OCI-LY7 (cell line): ENCODE measurements at regions of chr19 and their contacts with region 1.

Region 1: DNA sequence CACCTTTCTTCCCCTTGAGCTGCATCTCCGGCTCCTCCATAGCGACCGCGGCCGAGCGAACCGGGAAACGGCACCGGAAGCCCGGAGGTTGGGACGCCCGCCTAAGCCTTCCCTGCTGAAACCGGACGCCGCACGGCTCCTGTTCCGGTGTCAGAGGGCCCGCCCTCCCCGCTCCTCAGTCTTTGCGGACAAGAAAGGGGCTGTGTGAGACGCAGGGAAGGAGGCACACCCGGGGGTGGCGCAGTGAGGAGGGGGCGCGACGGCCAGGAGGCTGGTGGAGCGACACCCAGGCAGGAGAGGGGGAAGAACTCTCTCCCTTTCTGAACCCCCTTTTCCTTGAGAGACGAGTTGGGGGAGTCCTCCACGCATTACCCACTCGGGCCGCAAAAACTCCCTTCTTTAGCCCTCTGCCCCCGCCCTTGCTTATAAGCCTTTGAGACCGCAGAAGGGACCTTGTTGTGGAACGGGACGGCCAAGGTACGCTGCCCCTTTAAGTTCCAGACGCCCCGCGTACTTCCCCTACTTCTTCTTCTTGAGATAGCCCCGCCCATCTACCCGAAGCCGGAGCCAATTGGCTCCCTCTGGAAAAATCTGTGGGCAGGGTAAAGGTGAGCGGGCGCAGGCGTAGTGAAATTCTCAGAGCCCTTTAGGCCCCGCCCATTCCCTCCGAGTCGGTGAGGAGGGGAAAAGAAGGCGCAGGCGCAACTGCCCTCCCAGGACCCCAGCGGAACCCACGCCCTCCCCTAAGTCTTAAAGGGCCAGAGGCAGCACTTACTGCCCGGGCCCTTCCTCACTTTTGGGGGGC is at the starts of genes BORCS8 and RFXANK:
- DNase-seq: peak; percentile 100
- H3K4me3 ChIP-seq: peak within 1 kb of the TSS; percentile 93
- H3K27ac ChIP-seq: peak within 1 kb of the TSS; percentile 89
- H3K4me1 ChIP-seq: peaks cover 31% of the 10 kb centered on the region
- CTCF ChIP-seq: no peak
- total RNA-seq, gene BORCS8: 31.0 and 39.8 TPM in 2 replicates
- total RNA-seq, gene RFXANK: 103 and 105 TPM in 2 replicates

Region 2: DNA sequence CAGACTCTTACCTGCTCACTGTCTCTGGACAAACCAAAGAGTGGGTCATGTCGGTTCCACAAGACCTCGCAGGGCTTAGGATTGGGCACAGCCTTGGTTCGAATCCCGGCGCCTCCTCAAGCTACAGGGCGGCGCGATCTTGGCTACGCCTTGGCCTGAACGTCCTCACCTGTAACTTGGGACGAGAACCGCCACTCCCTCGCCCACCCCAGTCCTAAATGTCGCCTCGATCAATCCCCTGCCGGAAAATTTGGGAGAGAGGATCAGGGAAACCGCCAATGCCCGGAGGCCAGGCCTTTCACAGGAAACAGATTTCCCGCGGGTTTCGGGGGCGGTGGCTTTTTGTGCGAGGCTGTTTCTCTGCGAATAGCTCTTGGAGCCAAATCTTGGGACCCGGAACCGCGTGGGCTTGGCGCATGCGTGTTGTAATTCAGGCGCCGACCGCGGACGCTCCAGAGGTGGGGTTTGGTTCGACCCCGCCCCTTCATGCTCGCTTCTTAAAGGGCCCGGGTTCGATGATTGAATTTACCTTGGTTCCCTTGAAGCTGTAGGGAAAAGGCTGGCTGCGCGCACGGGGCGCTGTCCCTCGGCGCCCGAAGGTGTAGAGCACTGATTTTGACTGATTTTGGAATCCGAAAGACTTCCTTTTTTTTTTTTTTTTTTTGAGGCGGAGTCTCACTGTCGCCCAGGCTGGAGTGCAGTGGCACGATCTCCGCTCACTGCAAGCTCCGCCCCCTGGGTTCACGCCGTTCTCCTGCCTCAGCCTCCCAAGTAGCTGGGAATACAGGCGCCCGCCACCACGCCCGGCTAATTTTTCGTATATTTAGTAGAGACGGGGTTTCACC is 11.0 kb after region 1 on chr19 and contains the start of gene NR2C2AP:
- CTCF ChIA-PET with region 1: interaction called, 7 read pairs
- POLR2A ChIA-PET with region 1: interaction called, 24 read pairs
- intact Hi-C with region 1: no loop called
- DNase-seq: peak; percentile 95
- H3K4me3 ChIP-seq: peak within 1 kb of the TSS; percentile 92
- H3K27ac ChIP-seq: peak within 1 kb of the TSS; percentile 57
- H3K4me1 ChIP-seq: peaks cover 21% of the 10 kb centered on the region
- CTCF ChIP-seq: no peak
- total RNA-seq, gene NR2C2AP: 28.6 and 29.7 TPM in 2 replicates

Region 3: GRCh38 chr19:19361075-19361594 is 168.9 kb after region 1 on chr19:
- CTCF ChIA-PET with region 1: no interaction called
- POLR2A ChIA-PET with region 1: interaction called, 4 read pairs
- intact Hi-C with region 1: loop called (anchors 5 kb)
- DNase-seq: peak; percentile 81
- H3K4me3 ChIP-seq: no peak overlapping the region
- H3K27ac ChIP-seq: peak overlapping the region; percentile 20
- H3K4me1 ChIP-seq: peaks cover 30% of the 10 kb centered on the region
- CTCF ChIP-seq: peak; percentile 84